Activated CD4-positive, alpha-beta T cell treated with anti-CD3 and anti-CD28 coated beads, Interleukin-2, amount 10 ng/mL, durations not matched to agents 24 days and 14 days (primary cell): ENCODE measurements at regions of chr7 and their contacts with region 1.

Region 1: GRCh38 chr7:127769696-127770400 is 117.9 kb downstream of the SND1 start:
- DNase-seq: no peak
- H3K4me3 Mint-ChIP-seq: no peak overlapping the region
- H3K27ac Mint-ChIP-seq: no peak overlapping the region
- H3K4me1 Mint-ChIP-seq: peaks cover 22% of the 10 kb centered on the region
- H3K27me3 Mint-ChIP-seq: no peaks in the 10 kb centered on the region

Region 2: DNA sequence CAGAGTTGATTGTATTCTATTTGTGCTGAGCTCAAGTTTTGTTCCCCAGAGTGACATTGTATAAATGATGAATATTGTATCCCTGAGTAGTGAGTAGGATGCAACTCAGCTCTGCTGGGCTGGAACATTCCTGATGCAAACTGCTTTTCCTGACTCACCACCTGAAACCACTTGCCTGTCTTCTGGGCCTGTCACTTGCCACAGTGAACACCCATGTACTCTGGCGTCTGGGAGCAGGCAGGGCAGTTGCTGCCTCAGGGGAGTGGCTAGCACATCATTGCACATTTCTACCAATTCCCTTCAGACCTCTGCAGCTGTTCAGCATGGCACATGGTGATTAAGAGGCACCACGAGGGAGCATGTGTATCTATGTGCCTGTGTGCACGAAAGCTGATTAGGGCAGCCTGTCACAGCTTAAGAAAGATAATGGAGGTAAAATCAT is 39.4 kb after region 1 on chr7:
- intact Hi-C with region 1: loop called (anchors 5 kb)
- DNase-seq: no peak
- H3K4me3 Mint-ChIP-seq: no peak overlapping the region
- H3K27ac Mint-ChIP-seq: no peak overlapping the region
- H3K4me1 Mint-ChIP-seq: peaks cover 42% of the 10 kb centered on the region
- H3K27me3 Mint-ChIP-seq: no peaks in the 10 kb centered on the region